ENCODE measurements at regions of chrX and their contacts with region 1.

Region 1: DNA sequence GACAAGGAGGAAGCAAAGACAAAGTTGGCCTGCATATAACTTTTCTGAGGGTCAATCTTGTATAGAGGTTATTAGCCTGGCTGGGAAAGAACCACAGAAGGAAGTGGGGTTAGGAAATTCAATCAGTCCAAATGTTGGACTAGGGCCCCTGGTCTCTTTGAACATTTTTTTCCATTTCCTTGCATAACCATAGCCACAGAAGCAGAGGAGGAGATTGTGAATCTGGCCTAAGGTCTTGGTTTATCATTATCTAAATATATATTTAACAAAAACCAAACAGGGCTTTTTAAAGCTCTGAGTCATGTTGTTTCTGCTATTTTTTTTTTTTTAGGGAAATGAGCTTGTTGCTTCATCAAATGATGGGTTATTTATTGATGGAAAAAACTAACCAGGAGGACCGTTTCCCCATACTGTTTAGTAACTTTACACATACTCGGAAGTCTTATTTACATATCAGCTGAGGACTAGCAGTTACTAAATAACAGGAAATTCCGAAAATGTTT is 97.7 kb upstream of the ACSL4 start:
- DNase-seq: peak; percentile 75
- ATAC-seq: peak; percentile 46
- H3K4me3 ChIP-seq: no peak overlapping the region
- H3K27ac ChIP-seq: peak overlapping the region; percentile 85
- H3K4me1 ChIP-seq: peaks cover 13% of the 10 kb centered on the region
- H3K27me3 ChIP-seq: peaks cover under 1% of the 10 kb centered on the region; the same call in 1 of the 2 replicates
- CTCF ChIP-seq: no peak
- POLR2A ChIP-seq: no peak
- RAD21 ChIP-seq: no peak

Region 2: GRCh38 chrX:109660435-109661143 is 170.2 kb before region 1 on chrX:
- CTCF ChIA-PET with region 1: no interaction called
- POLR2A ChIA-PET with region 1: no interaction called
- dilution Hi-C with region 1: no loop called
- in situ Hi-C with region 1: no loop called
- intact Hi-C with region 1: no loop called
- DNase-seq: peak; percentile 32
- ATAC-seq: peak; percentile 17; the same call in 1 of the 2 replicates
- H3K4me3 ChIP-seq: no peak overlapping the region
- H3K27ac ChIP-seq: no peak overlapping the region
- H3K4me1 ChIP-seq: no peaks in the 10 kb centered on the region
- H3K27me3 ChIP-seq: no peaks in the 10 kb centered on the region
- CTCF ChIP-seq: no peak
- POLR2A ChIP-seq: no peak
- RAD21 ChIP-seq: no peak

Region 3: GRCh38 chrX:109760241-109760922 is 70.4 kb before region 1 on chrX:
- CTCF ChIA-PET with region 1: no interaction called
- POLR2A ChIA-PET with region 1: interaction called, 13 read pairs
- dilution Hi-C with region 1: no loop called
- in situ Hi-C with region 1: no loop called
- intact Hi-C with region 1: no loop called
- DNase-seq: no peak
- ATAC-seq: no peak
- H3K4me3 ChIP-seq: no peak overlapping the region
- H3K27ac ChIP-seq: no peak overlapping the region
- H3K4me1 ChIP-seq: no peaks in the 10 kb centered on the region
- H3K27me3 ChIP-seq: peaks cover 3% of the 10 kb centered on the region; the same call in 1 of the 2 replicates
- CTCF ChIP-seq: no peak
- POLR2A ChIP-seq: no peak
- RAD21 ChIP-seq: no peak

Region 4: GRCh38 chrX:109774706-109775105 is 56.0 kb before region 1 on chrX:
- CTCF ChIA-PET with region 1: no interaction called
- POLR2A ChIA-PET with region 1: no interaction called
- dilution Hi-C with region 1: no loop called
- in situ Hi-C with region 1: no loop called
- intact Hi-C with region 1: loop called (anchors 2 kb)
- DNase-seq: peak; percentile 77
- ATAC-seq: peak; percentile 92
- H3K4me3 ChIP-seq: no peak overlapping the region
- H3K27ac ChIP-seq: no peak overlapping the region
- H3K4me1 ChIP-seq: 0 out of 2 replicates have a peak, but pooled peaks cover 2% of the 10 kb centered on the region
- H3K27me3 ChIP-seq: no peaks in the 10 kb centered on the region
- CTCF ChIP-seq: no peak
- POLR2A ChIP-seq: no peak
- RAD21 ChIP-seq: no peak

Region 5: DNA sequence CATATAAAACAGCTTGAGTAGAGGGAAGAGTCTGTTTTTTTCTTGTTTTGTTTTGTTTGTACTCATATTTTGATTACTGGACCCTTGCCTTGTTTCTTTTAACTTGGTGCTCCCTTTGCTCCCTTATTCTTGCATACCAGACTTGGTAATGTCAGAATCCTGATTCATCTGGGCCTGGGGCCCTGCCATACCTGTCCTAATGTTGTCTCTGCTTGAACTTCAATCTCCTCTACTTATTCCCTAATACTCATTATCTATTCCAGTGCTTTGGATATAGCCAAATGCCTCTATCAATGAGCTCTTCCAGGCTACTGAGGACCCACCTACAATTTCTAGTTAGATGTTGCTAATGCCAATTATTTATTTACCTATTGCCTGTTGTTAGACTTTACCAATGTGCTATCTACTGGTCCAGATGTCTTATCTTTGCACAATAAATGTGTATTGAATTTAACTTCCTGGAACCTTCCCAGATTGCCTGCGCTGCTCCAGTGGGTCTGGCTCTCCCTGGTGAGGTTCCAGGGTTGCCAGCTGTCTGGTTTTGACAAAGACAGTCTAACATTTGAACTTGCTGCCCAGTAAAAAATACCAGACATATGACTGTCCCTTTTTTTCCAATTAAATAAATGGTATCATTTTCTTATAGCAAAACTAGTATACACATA is 33.3 kb before region 1 on chrX:
- CTCF ChIA-PET with region 1: no interaction called
- POLR2A ChIA-PET with region 1: no interaction called
- dilution Hi-C with region 1: no loop called
- in situ Hi-C with region 1: no loop called
- intact Hi-C with region 1: no loop called
- DNase-seq: no peak
- ATAC-seq: peak; percentile 17; the same call in 1 of the 2 replicates
- H3K4me3 ChIP-seq: no peak overlapping the region
- H3K27ac ChIP-seq: no peak overlapping the region
- H3K4me1 ChIP-seq: no peaks in the 10 kb centered on the region
- H3K27me3 ChIP-seq: peaks cover 4% of the 10 kb centered on the region; the same call in 1 of the 2 replicates
- CTCF ChIP-seq: no peak
- POLR2A ChIP-seq: no peak
- RAD21 ChIP-seq: no peak

Measured in IMR-90 (cell line).